Activated B cell treated with CpG ODN at 0.5 μM for 24 hours (primary cell): ENCODE measurements at regions of chr3 and their contacts with region 1.

Region 1: GRCh38 chr3:190696777-190697501 is 165.6 kb downstream of the GMNC start:
- DNase-seq: no peak
- ATAC-seq: no peak
- H3K4me3 Mint-ChIP-seq: no peak overlapping the region
- H3K27ac Mint-ChIP-seq: no peak overlapping the region
- H3K4me1 Mint-ChIP-seq: no peaks in the 10 kb centered on the region
- H3K27me3 Mint-ChIP-seq: peaks cover 7% of the 10 kb centered on the region
- CTCF ChIP-seq: no peak

Region 2: GRCh38 chr3:189967254-189967865 is 729.6 kb before region 1 on chr3:
- CTCF ChIA-PET with region 1: no interaction called
- POLR2A ChIA-PET with region 1: no interaction called
- intact Hi-C with region 1: loop called (anchors 1 kb)
- DNase-seq: no peak
- ATAC-seq: no peak
- H3K4me3 Mint-ChIP-seq: no peak overlapping the region
- H3K27ac Mint-ChIP-seq: no peak overlapping the region
- H3K4me1 Mint-ChIP-seq: no peaks in the 10 kb centered on the region
- H3K27me3 Mint-ChIP-seq: no peaks in the 10 kb centered on the region
- CTCF ChIP-seq: peak; percentile 94

Region 3: GRCh38 chr3:190224863-190225692 is 471.9 kb before region 1 on chr3:
- CTCF ChIA-PET with region 1: no interaction called
- POLR2A ChIA-PET with region 1: no interaction called
- intact Hi-C with region 1: loop called (anchors 10 kb)
- DNase-seq: no peak
- ATAC-seq: no peak
- H3K4me3 Mint-ChIP-seq: no peak overlapping the region
- H3K27ac Mint-ChIP-seq: no peak overlapping the region
- H3K4me1 Mint-ChIP-seq: no peaks in the 10 kb centered on the region
- H3K27me3 Mint-ChIP-seq: peaks cover 2% of the 10 kb centered on the region
- CTCF ChIP-seq: no peak

Region 4: DNA sequence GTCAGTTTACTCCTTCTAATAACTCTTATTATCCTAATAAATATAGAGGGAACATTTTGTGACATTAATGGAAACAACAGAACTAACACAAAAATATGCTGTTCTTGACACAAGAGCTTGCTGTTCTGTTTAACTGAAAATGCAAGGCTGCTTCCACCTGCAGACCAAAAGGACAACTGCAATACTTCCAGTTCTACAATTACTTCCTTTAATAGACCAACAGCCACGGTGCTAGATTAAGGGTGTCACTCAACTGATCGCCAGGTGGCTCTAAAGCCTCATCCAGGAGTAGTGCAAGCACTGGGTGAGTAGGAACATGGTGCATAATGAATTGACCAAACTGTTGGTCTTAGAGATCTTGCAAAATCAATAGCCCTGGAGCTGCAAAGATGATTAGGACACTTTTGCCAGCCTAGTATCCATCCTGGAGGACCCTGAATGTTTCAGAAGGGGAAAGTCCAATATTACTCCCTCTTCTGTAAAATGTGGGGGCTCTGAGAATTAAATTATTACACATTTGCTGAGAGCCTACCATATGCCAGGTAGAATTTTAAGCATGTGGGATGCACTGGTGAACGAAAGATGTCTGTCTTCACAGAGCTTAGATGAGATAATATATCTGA is 312.6 kb before region 1 on chr3:
- CTCF ChIA-PET with region 1: no interaction called
- POLR2A ChIA-PET with region 1: no interaction called
- intact Hi-C with region 1: no loop called
- DNase-seq: no peak
- ATAC-seq: no peak
- H3K4me3 Mint-ChIP-seq: no peak overlapping the region
- H3K27ac Mint-ChIP-seq: no peak overlapping the region
- H3K4me1 Mint-ChIP-seq: no peaks in the 10 kb centered on the region
- H3K27me3 Mint-ChIP-seq: no peaks in the 10 kb centered on the region
- CTCF ChIP-seq: no peak

Region 5: DNA sequence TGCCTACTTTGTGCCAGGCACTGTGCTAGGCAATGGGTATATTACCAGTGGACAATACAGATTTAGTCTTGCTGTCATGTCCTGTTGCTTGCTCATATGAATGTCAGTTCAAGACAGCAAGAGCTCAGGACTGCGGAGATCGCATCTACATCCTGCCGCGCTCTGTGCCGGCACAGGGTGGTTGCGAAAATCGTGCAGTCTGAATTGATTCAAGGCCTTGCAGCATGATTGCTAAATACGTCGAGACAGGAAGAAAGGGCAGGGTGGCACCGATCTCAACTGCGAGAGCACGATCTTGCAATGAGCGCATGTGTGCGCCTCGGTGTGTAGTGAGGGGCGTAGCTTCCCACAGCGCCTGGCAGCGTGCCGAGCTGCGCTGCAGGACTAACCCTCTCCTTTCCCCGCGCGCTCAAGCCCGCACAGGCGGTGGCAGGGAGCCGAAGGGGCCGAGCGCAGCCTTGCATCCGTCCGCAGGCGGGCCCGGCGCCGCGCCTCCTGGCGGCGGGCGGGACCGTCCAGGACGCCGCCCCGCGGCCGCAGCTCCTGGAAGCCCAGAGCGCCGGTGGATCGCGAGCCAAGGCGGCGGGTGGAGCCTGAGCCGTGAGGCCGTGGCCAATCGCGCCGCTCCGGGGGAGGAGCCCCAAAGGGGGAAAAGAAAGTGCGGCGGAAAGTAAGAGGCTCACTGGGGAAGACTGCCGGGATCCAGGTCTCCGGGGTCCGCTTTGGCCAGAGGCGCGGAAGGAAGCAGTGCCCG is 183.4 kb before region 1 on chr3 and contains the start of gene IL1RAP:
- CTCF ChIA-PET with region 1: interaction called, 3 read pairs
- POLR2A ChIA-PET with region 1: no interaction called
- intact Hi-C with region 1: loop called (anchors 1 kb)
- DNase-seq: peak; percentile 83
- ATAC-seq: peak; percentile 96
- H3K4me3 Mint-ChIP-seq: peak within 1 kb of the TSS; percentile 92
- H3K27ac Mint-ChIP-seq: peak within 1 kb of the TSS; percentile 84
- H3K4me1 Mint-ChIP-seq: peaks cover 18% of the 10 kb centered on the region
- H3K27me3 Mint-ChIP-seq: peaks cover 9% of the 10 kb centered on the region
- CTCF ChIP-seq: no peak
- total RNA-seq, gene IL1RAP: 4.7 and 6.3 TPM in 2 replicates

Region 6: GRCh38 chr3:190585805-190586630 is 110.9 kb before region 1 on chr3:
- CTCF ChIA-PET with region 1: no interaction called
- POLR2A ChIA-PET with region 1: no interaction called
- intact Hi-C with region 1: loop called (anchors 10 kb)
- DNase-seq: no peak
- ATAC-seq: peak; percentile 25
- H3K4me3 Mint-ChIP-seq: no peak overlapping the region
- H3K27ac Mint-ChIP-seq: no peak overlapping the region
- H3K4me1 Mint-ChIP-seq: peaks cover 25% of the 10 kb centered on the region
- H3K27me3 Mint-ChIP-seq: no peaks in the 10 kb centered on the region
- CTCF ChIP-seq: no peak